Upper lobe of right lung (tissue), 1 donor: ENCODE measurements at regions of chr11 and their contacts with region 1.

Region 1: DNA sequence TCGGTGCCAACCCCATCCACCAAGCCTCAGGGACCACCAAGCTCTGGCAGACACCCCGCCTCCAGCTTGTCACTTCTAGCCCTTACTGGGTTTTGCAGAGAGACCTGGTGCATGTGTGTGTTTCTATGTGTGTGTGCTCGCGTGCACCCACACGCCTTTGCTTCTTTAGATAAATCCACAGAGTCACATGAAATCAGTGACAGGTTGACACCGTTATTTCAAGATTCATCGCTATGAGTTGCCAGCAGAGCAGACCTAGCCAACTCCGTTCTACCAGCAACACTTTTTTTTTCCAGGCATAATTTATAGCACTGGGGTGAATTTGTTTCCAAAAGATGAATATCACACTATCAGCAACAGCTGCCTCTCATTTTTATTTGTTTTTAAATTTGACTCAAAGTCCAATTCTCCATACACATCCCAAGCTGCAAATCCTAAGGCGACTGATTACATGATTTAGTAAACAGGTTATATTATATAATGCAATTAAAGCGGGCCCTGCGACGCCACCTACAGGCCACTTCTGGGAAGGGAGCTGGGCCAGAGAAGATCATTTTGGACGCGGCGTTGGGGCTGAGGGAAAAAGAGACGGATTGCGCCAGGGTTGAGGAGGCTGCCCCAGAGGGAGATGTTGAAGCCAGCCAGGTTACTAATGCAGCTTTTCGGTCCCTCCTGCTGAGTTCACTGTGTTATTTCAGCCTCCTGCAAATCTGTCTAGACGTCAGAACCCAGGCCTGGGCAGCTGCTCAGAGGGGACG is 150.5 kb downstream of the FEZ1 start:
- DNase-seq: peak; percentile 77
- ATAC-seq: peak; percentile 68
- H3K4me3 ChIP-seq: no peak overlapping the region
- H3K27ac ChIP-seq: peak overlapping the region; percentile 42
- H3K4me1 ChIP-seq: peaks cover 9% of the 10 kb centered on the region
- H3K27me3 ChIP-seq: no peaks in the 10 kb centered on the region
- CTCF ChIP-seq: peak; percentile 82

Region 2: GRCh38 chr11:125224391-125225010 is 121.1 kb before region 1 on chr11:
- intact Hi-C with region 1: no loop called
- DNase-seq: no peak
- ATAC-seq: no peak
- H3K4me3 ChIP-seq: no peak overlapping the region
- H3K27ac ChIP-seq: no peak overlapping the region
- H3K4me1 ChIP-seq: peaks cover 12% of the 10 kb centered on the region
- H3K27me3 ChIP-seq: no peaks in the 10 kb centered on the region
- CTCF ChIP-seq: peak; percentile 22

Region 3: DNA sequence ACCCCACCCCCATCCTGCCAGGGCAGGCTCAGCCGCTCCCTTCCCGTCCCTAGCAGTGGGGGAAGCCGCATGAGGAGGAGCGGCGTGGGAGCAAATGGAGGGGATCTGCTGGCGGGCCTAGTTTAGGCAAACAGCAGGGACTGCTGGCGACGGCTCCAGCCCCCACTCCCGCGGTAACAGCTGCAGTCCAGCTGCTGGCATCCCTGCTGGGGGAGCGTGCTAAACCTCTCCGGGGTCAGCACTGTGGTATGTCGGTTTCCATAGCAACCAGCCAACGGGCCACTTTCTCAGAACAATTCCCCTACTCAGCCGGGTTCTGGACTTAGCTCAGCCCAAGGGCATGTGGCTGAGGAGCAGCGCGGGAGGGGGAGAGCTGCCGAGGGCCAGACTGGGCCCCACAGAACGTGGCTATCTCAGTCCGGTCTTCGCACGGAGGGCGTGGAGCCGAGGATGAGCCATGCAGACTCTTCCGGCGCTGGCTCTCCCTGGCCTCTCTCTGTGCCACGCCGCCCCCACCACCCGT is 82.3 kb before region 1 on chr11:
- intact Hi-C with region 1: loop called (anchors 10 kb)
- DNase-seq: peak; percentile 82
- ATAC-seq: peak; percentile 73
- H3K4me3 ChIP-seq: no peak overlapping the region
- H3K27ac ChIP-seq: peak overlapping the region; percentile 78
- H3K4me1 ChIP-seq: peaks cover 7% of the 10 kb centered on the region
- H3K27me3 ChIP-seq: peaks cover 22% of the 10 kb centered on the region
- CTCF ChIP-seq: no peak